ENCODE measurements at regions of chr5 and their contacts with region 1.

Region 1: GRCh38 chr5:149551200-149552037 is at the start of gene CSNK1A1:
- DNase-seq: peak; percentile 97 to 100 (median 99)
- ATAC-seq: peak; percentile 86
- H3K4me3 ChIP-seq: peak within 1 kb of the TSS; percentile 97
- H3K4me3 Mint-ChIP-seq: peak within 1 kb of the TSS; percentile 99
- H3K27ac ChIP-seq: peak within 1 kb of the TSS; percentile 94 to 98
- H3K27ac Mint-ChIP-seq: peak within 1 kb of the TSS; percentile 98
- H3K4me1 ChIP-seq: peaks cover 26% of the 10 kb centered on the region
- H3K4me1 Mint-ChIP-seq: peaks cover 36% of the 10 kb centered on the region
- H3K27me3 ChIP-seq: no peaks in the 10 kb centered on the region
- H3K27me3 Mint-ChIP-seq: no peaks in the 10 kb centered on the region
- CTCF ChIP-seq: peak; percentile 67
- total RNA-seq, gene CSNK1A1: 201 to 217 TPM

Region 2: GRCh38 chr5:149162401-149163084 is 388.9 kb before region 1 on chr5:
- CTCF ChIA-PET with region 1: no interaction called
- POLR2A ChIA-PET with region 1: no interaction called
- intact Hi-C with region 1: no loop called
- DNase-seq: no peak
- ATAC-seq: no peak
- H3K4me3 ChIP-seq: no peak overlapping the region
- H3K4me3 Mint-ChIP-seq: no peak overlapping the region
- H3K27ac ChIP-seq: no peak overlapping the region
- H3K27ac Mint-ChIP-seq: no peak overlapping the region
- H3K4me1 ChIP-seq: no peaks in the 10 kb centered on the region
- H3K4me1 Mint-ChIP-seq: no peaks in the 10 kb centered on the region
- H3K27me3 ChIP-seq: no peaks in the 10 kb centered on the region
- H3K27me3 Mint-ChIP-seq: no peaks in the 10 kb centered on the region
- CTCF ChIP-seq: no peak

Region 3: GRCh38 chr5:149345147-149345875 is 206.1 kb before region 1 on chr5 and contains the start of gene GRPEL2:
- CTCF ChIA-PET with region 1: interaction called, 5 read pairs
- POLR2A ChIA-PET with region 1: interaction called, 30 read pairs
- intact Hi-C with region 1: no loop called
- DNase-seq: peak; percentile 68 to 94 (median 82)
- ATAC-seq: peak; percentile 59
- H3K4me3 ChIP-seq: peak within 1 kb of the TSS; percentile 75
- H3K4me3 Mint-ChIP-seq: peak within 1 kb of the TSS; percentile 92
- H3K27ac ChIP-seq: peak within 1 kb of the TSS; percentile 76 to 85
- H3K27ac Mint-ChIP-seq: peak within 1 kb of the TSS; percentile 85
- H3K4me1 ChIP-seq: peaks cover 59% of the 10 kb centered on the region
- H3K4me1 Mint-ChIP-seq: peaks cover 59% of the 10 kb centered on the region
- H3K27me3 ChIP-seq: no peaks in the 10 kb centered on the region
- H3K27me3 Mint-ChIP-seq: no peaks in the 10 kb centered on the region
- CTCF ChIP-seq: no peak
- total RNA-seq, gene GRPEL2: 20.8 to 22.5 TPM

Region 4: GRCh38 chr5:149489605-149490037 is 61.8 kb before region 1 on chr5:
- CTCF ChIA-PET with region 1: no interaction called
- POLR2A ChIA-PET with region 1: interaction called, 6 read pairs
- intact Hi-C with region 1: loop called in 1 of 2 experiments (anchors 5 kb)
- DNase-seq: no peak
- ATAC-seq: no peak
- H3K4me3 ChIP-seq: no peak overlapping the region
- H3K4me3 Mint-ChIP-seq: no peak overlapping the region
- H3K27ac ChIP-seq: no peak overlapping the region
- H3K27ac Mint-ChIP-seq: peak overlapping the region; percentile 31
- H3K4me1 ChIP-seq: no peaks in the 10 kb centered on the region
- H3K4me1 Mint-ChIP-seq: peaks cover 15% of the 10 kb centered on the region
- H3K27me3 ChIP-seq: no peaks in the 10 kb centered on the region
- H3K27me3 Mint-ChIP-seq: no peaks in the 10 kb centered on the region
- CTCF ChIP-seq: no peak

Region 5: DNA sequence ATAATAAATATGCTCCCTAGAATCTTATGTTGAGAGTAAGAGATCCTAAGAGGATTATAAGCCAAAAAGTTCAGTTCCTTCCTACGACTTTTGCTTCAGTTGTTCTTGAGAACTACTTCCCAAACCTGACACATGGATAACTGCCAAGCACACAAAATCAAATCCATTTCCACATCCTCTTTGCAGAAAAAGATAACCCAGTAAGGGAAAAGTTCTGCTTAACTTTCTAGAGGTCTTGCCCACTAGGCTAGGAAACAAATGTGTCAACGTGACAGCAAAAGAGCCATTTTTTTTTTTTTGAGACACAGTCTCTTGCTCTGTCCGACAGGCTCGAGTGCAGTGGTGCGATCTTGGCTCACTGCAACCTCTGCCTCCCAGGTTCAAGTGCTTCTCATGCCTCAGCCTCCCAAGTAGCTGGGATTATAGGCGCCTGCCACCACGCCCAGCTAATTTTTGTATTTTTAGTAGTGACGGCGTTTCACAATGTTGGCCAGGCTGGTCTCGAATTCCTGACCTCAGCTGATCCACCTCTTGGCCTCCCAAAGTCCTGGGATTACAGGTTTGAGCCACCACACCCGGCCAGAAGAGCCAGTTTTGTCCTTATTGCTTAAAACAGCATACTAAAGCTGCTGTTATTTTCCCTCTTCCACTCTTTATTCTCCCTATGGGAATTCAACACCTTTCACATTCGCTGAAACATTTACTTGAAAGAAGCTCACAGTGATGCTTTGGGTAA is 24.4 kb before region 1 on chr5:
- CTCF ChIA-PET with region 1: interaction called, 4 read pairs
- POLR2A ChIA-PET with region 1: interaction called, 10 read pairs
- intact Hi-C with region 1: no loop called
- DNase-seq: no peak
- ATAC-seq: no peak
- H3K4me3 ChIP-seq: no peak overlapping the region
- H3K4me3 Mint-ChIP-seq: peak overlapping the region; percentile 40
- H3K27ac ChIP-seq: no peak overlapping the region
- H3K27ac Mint-ChIP-seq: peak overlapping the region; percentile 15
- H3K4me1 ChIP-seq: peaks cover 43% of the 10 kb centered on the region
- H3K4me1 Mint-ChIP-seq: peaks cover 93% of the 10 kb centered on the region
- H3K27me3 ChIP-seq: no peaks in the 10 kb centered on the region
- H3K27me3 Mint-ChIP-seq: no peaks in the 10 kb centered on the region
- CTCF ChIP-seq: no peak

Region 6: GRCh38 chr5:150122158-150122510 is 570.7 kb after region 1 on chr5:
- CTCF ChIA-PET with region 1: no interaction called
- POLR2A ChIA-PET with region 1: no interaction called
- intact Hi-C with region 1: no loop called
- DNase-seq: peak in 3 of 14 experiments; percentile 19 to 53 (median 43)
- ATAC-seq: no peak
- H3K4me3 ChIP-seq: no peak overlapping the region
- H3K4me3 Mint-ChIP-seq: no peak overlapping the region
- H3K27ac ChIP-seq: no peak overlapping the region
- H3K27ac Mint-ChIP-seq: no peak overlapping the region
- H3K4me1 ChIP-seq: no peaks in the 10 kb centered on the region
- H3K4me1 Mint-ChIP-seq: no peaks in the 10 kb centered on the region
- H3K27me3 ChIP-seq: no peaks in the 10 kb centered on the region
- H3K27me3 Mint-ChIP-seq: no peaks in the 10 kb centered on the region
- CTCF ChIP-seq: no peak

Region 7: DNA sequence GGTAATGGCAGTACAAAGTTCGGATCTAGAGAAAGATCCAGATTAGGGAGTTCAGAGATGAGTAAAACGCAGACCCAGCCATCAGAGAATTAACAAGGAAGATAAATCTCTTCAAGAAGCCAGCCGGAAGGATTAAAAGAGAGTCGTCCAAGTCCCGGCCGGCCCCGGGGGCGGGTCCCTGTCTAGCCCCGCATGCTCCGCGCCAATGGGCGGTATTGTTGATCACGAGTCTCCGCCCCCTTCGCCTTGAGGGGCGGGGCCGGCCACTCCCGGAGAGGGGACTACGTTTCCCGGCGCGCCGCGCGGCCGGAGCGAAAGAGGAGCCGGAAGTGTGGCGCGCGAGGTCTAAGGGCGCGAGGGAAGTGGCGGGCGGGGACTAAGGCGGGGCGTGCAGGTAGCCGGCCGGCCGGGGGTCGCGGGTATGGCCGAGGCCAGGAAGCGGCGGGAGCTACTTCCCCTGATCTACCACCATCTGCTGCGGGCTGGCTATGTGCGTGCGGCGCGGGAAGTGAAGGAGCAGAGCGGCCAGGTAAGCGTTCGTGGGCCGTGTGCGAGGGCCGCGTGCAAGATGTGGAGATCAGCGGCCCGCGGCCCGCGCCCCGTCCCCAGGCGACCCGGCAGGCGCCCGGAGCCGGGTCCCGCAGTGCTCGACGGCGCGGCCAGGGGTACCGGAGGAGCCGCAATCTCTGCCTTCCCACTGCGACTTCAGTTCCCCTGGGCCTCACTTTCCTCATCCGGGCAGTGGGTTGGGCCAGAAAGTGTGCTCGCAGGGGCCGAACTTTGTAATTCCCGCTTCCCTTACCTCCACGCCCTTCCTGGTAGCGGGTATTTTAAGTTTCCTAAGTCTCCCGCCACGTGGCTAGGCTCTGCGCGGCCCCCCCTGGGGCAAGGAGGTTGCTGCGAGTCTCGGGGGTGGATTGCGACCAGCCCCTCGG is 806.2 kb after region 1 on chr5 and contains the start of gene TCOF1:
- CTCF ChIA-PET with region 1: no interaction called
- POLR2A ChIA-PET with region 1: no interaction called
- intact Hi-C with region 1: loop called in 1 of 2 experiments (anchors 10 kb)
- DNase-seq: peak; percentile 93 to 98 (median 97)
- ATAC-seq: peak; percentile 98
- H3K4me3 ChIP-seq: peak within 1 kb of the TSS; percentile 86
- H3K4me3 Mint-ChIP-seq: peak within 1 kb of the TSS; percentile 89
- H3K27ac ChIP-seq: peak within 1 kb of the TSS in 1 of 2 donors; percentile 46
- H3K27ac Mint-ChIP-seq: peak within 1 kb of the TSS; percentile 73
- H3K4me1 ChIP-seq: peaks cover 28% of the 10 kb centered on the region
- H3K4me1 Mint-ChIP-seq: peaks cover 47% of the 10 kb centered on the region
- H3K27me3 ChIP-seq: no peaks in the 10 kb centered on the region
- H3K27me3 Mint-ChIP-seq: no peaks in the 10 kb centered on the region
- CTCF ChIP-seq: no peak
- total RNA-seq, gene TCOF1: 40.4 to 43.2 TPM

Measured in CD4-positive, alpha-beta T cell (primary cell).